Heart left ventricle (tissue), 16 donors: ENCODE measurements at regions of chr17 and their contacts with region 1.

Region 1: GRCh38 chr17:27502526-27503324 is 46.5 kb downstream of the KSR1 start:
- DNase-seq: peak in 1 of 5 donors; percentile 31
- ATAC-seq: peak; percentile 50 to 69 (median 60)
- H3K4me3 ChIP-seq: no peak overlapping the region
- H3K27ac ChIP-seq: no peak overlapping the region
- H3K4me1 ChIP-seq: peaks cover 0 to 25% (median 7%) of the 10 kb centered on the region in 12 donors
- H3K27me3 ChIP-seq: no peaks in the 10 kb centered on the region
- CTCF ChIP-seq: no peak
- POLR2A ChIP-seq: no peak

Region 2: DNA sequence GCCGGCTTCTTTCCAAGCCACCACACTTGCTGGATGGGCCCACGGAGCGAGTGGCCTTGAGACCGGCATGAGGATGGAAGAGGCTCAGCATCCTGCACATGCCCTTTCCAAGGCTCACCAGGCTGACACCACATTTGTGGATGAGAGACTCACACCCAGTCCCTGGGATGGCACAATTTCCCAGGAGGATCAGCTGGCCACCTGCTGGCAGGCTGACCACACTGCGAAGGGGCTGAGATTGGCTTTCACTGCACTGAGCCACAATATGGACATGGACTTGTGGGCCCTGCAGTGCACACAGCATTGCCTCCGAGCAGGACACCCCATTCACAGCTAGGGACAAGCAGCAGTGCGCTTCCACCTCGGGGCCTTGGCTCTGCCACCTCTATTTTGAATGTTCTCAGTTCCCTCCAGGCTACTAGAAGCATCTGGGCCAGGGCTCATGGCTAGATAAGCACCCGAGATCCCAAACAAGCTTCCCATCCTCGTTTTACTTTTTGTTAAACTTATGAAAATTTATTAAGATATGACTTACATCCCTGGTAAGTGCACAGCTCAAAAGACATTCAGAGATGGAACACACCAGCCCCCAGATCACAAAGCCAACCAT is 71.7 kb before region 1 on chr17:
- intact Hi-C with region 1: no loop called
- DNase-seq: peak in 1 of 5 donors; percentile 25
- ATAC-seq: peak in 3 of 4 donors; percentile 64 to 66 (median 65)
- H3K4me3 ChIP-seq: no peak overlapping the region
- H3K27ac ChIP-seq: no peak overlapping the region
- H3K4me1 ChIP-seq: no peaks in the 10 kb centered on the region
- H3K27me3 ChIP-seq: no peaks in the 10 kb centered on the region
- CTCF ChIP-seq: peak; percentile 33 to 59 (median 44)
- POLR2A ChIP-seq: no peak

Region 3: DNA sequence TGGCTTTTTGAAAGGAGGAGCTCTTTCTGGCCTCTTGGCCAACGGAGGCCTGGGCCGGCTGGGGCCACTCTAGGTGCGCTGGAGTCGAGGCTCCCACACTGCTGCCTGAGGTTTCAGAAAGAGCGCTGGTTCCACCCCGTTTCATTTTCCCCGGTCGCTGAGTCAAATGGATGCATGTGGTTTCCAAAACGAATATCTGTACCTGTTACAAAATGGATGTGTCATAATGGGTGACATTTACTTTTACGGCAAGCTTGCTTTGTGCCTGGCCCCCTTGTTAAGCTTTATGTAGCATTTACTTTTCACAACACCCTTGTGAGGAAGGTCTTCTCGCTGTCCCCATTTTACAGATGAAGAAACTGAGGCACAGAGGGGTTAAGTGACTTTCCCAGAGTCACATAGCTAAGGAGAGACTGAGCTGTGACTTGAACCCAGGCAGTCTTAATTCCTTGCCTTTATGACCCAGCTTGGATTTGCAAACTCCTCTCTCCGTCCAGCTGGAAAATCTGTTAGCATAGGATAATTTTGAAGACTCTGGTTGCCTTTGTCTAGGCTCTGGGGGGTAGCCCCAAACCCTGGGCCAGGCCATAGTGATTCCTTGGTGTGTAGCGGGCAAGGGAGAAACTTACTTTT is 35.9 kb before region 1 on chr17:
- intact Hi-C with region 1: loop called in 1 of 10 experiments (anchors 5 kb)
- DNase-seq: peak in 3 of 5 donors; percentile 26 to 35 (median 30)
- ATAC-seq: peak in 2 of 4 donors; percentile 48 to 73
- H3K4me3 ChIP-seq: peak overlapping the region in 2 of 12 donors; percentile 5 to 10
- H3K27ac ChIP-seq: peak overlapping the region in 9 of 12 donors; percentile 8 to 72 (median 55)
- H3K4me1 ChIP-seq: peaks cover 0 to 58% (median 18%) of the 10 kb centered on the region in 12 donors
- H3K27me3 ChIP-seq: no peaks in the 10 kb centered on the region
- CTCF ChIP-seq: no peak
- POLR2A ChIP-seq: no peak

Region 4: GRCh38 chr17:27535036-27535928 is 32.6 kb after region 1 on chr17:
- intact Hi-C with region 1: loop called in 1 of 10 experiments (anchors 5 kb)
- DNase-seq: no peak
- ATAC-seq: no peak
- H3K4me3 ChIP-seq: no peak overlapping the region
- H3K27ac ChIP-seq: no peak overlapping the region
- H3K4me1 ChIP-seq: peaks cover 0 to 80% (median 11%) of the 10 kb centered on the region in 12 donors
- H3K27me3 ChIP-seq: no peaks in the 10 kb centered on the region
- CTCF ChIP-seq: no peak
- POLR2A ChIP-seq: no peak